CD8-positive, alpha-beta T cell (primary cell): ENCODE measurements at regions of chr1 and their contacts with region 1.

Region 1: GRCh38 chr1:32221980-32222755 is at the starts of genes EIF3I and TMEM234:
- DNase-seq: peak; percentile 75 to 96 (median 91)
- ATAC-seq: peak; percentile 85
- H3K4me3 ChIP-seq: peak within 1 kb of the TSS; percentile 96 to 99
- H3K4me3 Mint-ChIP-seq: peak within 1 kb of the TSS; percentile 97
- H3K27ac ChIP-seq: peak within 1 kb of the TSS; percentile 99 to 100
- H3K27ac Mint-ChIP-seq: peak within 1 kb of the TSS; percentile 99
- H3K4me1 ChIP-seq: peaks cover 30% of the 10 kb centered on the region
- H3K4me1 Mint-ChIP-seq: peaks cover 49% of the 10 kb centered on the region
- H3K27me3 ChIP-seq: no peaks in the 10 kb centered on the region
- H3K27me3 Mint-ChIP-seq: no peaks in the 10 kb centered on the region
- CTCF ChIP-seq: no peak
- total RNA-seq, gene EIF3I: 97.4 to 101 TPM
- total RNA-seq, gene TMEM234: 8.6 to 9.1 TPM

Region 2: DNA sequence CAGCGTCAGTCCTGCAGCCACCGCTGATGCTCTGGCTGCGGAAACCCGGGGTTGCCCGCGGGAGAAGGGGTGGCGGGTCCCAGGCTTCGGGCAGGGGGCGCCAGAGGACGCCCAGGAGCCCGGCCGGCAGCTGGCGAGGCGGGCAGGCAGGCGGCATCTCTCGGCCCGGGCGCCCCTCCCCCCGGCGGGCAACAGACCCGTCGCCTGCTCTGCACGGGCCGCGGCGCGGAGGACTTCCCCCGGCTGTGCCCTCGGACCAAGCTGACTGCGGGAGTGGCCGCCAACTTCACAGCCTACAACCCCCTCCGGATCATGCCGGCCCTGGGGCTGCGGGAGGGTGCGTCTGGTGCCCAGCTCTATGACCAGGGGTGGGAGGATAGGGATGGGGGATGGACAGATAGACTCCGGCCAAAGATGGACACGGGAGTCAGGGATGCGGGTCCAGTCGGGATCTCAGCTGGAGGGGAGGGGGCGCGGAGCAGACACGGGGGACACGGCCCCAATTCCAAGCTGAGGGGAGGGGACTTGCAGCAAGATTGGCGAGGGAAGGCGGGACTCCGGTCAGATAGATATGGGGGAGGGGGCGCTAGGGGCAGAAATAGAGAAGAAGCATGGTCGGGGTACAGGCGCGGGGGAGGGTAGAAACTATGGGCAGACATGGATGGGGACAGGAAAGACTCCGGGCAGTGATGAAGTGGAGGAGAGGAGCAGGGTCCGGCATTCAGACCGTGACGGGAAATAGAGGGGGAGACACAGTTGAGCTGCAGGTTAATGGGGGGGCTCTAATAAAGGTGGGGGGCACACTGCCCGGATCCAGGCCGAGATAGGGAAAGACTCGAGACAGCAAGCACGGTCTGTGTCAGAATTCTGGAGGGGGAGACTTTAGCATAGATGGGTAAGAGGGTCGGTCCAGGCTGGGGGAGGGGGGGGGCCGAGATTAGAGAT is 459.2 kb before region 1 on chr1:
- CTCF ChIA-PET with region 1: no interaction called
- POLR2A ChIA-PET with region 1: no interaction called
- intact Hi-C with region 1: loop called in 1 of 2 experiments (anchors 5 kb)
- DNase-seq: peak; percentile 39 to 86 (median 69)
- ATAC-seq: peak; percentile 43
- H3K4me3 ChIP-seq: peak overlapping the region; percentile 41 to 57
- H3K4me3 Mint-ChIP-seq: peak overlapping the region; percentile 80
- H3K27ac ChIP-seq: no peak overlapping the region
- H3K27ac Mint-ChIP-seq: no peak overlapping the region
- H3K4me1 ChIP-seq: peaks cover 40% of the 10 kb centered on the region
- H3K4me1 Mint-ChIP-seq: peaks cover 29% of the 10 kb centered on the region
- H3K27me3 ChIP-seq: peaks cover 11 to 14% of the 10 kb centered on the region in 2 experiments
- H3K27me3 Mint-ChIP-seq: peaks cover 11% of the 10 kb centered on the region
- CTCF ChIP-seq: peak; percentile 45

Region 3: GRCh38 chr1:32107742-32108661 is 114.2 kb before region 1 on chr1 and contains the start of gene KPNA6:
- CTCF ChIA-PET with region 1: no interaction called
- POLR2A ChIA-PET with region 1: no interaction called
- intact Hi-C with region 1: loop called in 1 of 2 experiments (anchors 1 kb)
- DNase-seq: peak; percentile 83 to 98 (median 90)
- ATAC-seq: peak; percentile 89
- H3K4me3 ChIP-seq: peak within 1 kb of the TSS; percentile 87 to 95
- H3K4me3 Mint-ChIP-seq: peak within 1 kb of the TSS; percentile 98
- H3K27ac ChIP-seq: peak within 1 kb of the TSS; percentile 84 to 93
- H3K27ac Mint-ChIP-seq: peak within 1 kb of the TSS; percentile 98
- H3K4me1 ChIP-seq: peaks cover 45% of the 10 kb centered on the region
- H3K4me1 Mint-ChIP-seq: peaks cover 50% of the 10 kb centered on the region
- H3K27me3 ChIP-seq: no peaks in the 10 kb centered on the region
- H3K27me3 Mint-ChIP-seq: no peaks in the 10 kb centered on the region
- CTCF ChIP-seq: no peak
- total RNA-seq, gene KPNA6: 51.7 to 58.7 TPM

Region 4: GRCh38 chr1:32205401-32206370 is 16.5 kb before region 1 on chr1 and contains the start of gene IQCC:
- CTCF ChIA-PET with region 1: interaction called, 3 read pairs
- POLR2A ChIA-PET with region 1: interaction called, 4 read pairs
- intact Hi-C with region 1: loop called (anchors 1 kb)
- DNase-seq: peak; percentile 68 to 94 (median 85)
- ATAC-seq: peak; percentile 57
- H3K4me3 ChIP-seq: peak within 1 kb of the TSS; percentile 65 to 77
- H3K4me3 Mint-ChIP-seq: peak within 1 kb of the TSS; percentile 87
- H3K27ac ChIP-seq: peak within 1 kb of the TSS; percentile 62 to 67
- H3K27ac Mint-ChIP-seq: peak within 1 kb of the TSS; percentile 84
- H3K4me1 ChIP-seq: peaks cover 30% of the 10 kb centered on the region
- H3K4me1 Mint-ChIP-seq: peaks cover 36% of the 10 kb centered on the region
- H3K27me3 ChIP-seq: no peaks in the 10 kb centered on the region
- H3K27me3 Mint-ChIP-seq: no peaks in the 10 kb centered on the region
- CTCF ChIP-seq: no peak
- total RNA-seq, gene IQCC: 1.3 to 2.0 TPM

Region 5: DNA sequence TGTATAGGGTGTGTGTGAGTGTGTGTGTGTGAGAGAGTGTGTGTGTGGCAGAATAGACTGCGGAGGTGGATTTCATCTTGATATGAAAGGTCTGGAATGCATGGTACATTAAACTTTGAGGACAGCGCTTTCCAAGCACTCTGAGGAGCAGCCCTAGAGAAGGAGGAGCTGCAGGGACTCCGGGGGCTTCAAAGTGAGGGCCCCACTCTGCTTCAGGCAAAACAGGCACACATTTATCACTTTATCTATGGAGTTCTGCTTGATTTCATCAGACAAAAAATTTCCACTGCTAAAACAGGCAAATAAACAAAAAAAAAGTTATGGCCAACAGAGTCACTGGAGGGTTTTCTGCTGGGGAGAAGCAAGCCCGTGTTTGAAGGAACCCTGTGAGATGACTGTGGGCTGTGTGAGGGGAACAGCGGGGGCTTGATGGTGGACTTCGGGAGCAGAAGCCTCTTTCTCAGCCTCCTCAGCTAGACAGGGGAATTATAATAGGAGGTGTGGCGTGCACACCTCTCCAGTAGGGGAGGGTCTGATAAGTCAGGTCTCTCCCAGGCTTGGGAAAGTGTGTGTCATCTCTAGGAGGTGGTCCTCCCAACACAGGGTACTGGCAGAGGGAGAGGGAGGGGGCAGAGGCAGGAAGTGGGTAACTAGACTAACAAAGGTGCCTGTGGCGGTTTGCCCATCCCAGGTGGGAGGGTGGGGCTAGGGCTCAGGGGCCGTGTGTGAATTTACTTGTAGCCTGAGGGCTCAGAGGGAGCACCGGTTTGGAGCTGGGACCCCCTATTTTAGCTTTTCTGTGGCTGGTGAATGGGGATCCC is 51.4 kb after region 1 on chr1:
- CTCF ChIA-PET with region 1: interaction called, 3 read pairs
- POLR2A ChIA-PET with region 1: no interaction called
- intact Hi-C with region 1: loop called (anchors 2 to 10 kb)
- DNase-seq: peak; percentile 58 to 96 (median 87)
- ATAC-seq: peak; percentile 88
- H3K4me3 ChIP-seq: peak overlapping the region; percentile 23 to 53
- H3K4me3 Mint-ChIP-seq: peak overlapping the region; percentile 83
- H3K27ac ChIP-seq: peak overlapping the region; percentile 36 to 77
- H3K27ac Mint-ChIP-seq: peak overlapping the region; percentile 98
- H3K4me1 ChIP-seq: peaks cover 78% of the 10 kb centered on the region
- H3K4me1 Mint-ChIP-seq: peaks cover 67% of the 10 kb centered on the region
- H3K27me3 ChIP-seq: no peaks in the 10 kb centered on the region
- H3K27me3 Mint-ChIP-seq: no peaks in the 10 kb centered on the region
- CTCF ChIP-seq: no peak

Region 6: GRCh38 chr1:32351399-32352238 is 129.5 kb after region 1 on chr1:
- CTCF ChIA-PET with region 1: interaction called, 3 read pairs
- POLR2A ChIA-PET with region 1: no interaction called
- intact Hi-C with region 1: loop called in 1 of 2 experiments (anchors 1 kb)
- DNase-seq: peak; percentile 81 to 97 (median 90)
- ATAC-seq: peak; percentile 95
- H3K4me3 ChIP-seq: peak overlapping the region; percentile 57 to 85
- H3K4me3 Mint-ChIP-seq: peak overlapping the region; percentile 81
- H3K27ac ChIP-seq: peak overlapping the region; percentile 60 to 69
- H3K27ac Mint-ChIP-seq: peak overlapping the region; percentile 49
- H3K4me1 ChIP-seq: peaks cover 30% of the 10 kb centered on the region
- H3K4me1 Mint-ChIP-seq: peaks cover 49% of the 10 kb centered on the region
- H3K27me3 ChIP-seq: no peaks in the 10 kb centered on the region
- H3K27me3 Mint-ChIP-seq: no peaks in the 10 kb centered on the region
- CTCF ChIP-seq: no peak

Region 7: GRCh38 chr1:33430692-33431593 is 1208.8 kb after region 1 on chr1 and contains the start of gene PHC2:
- CTCF ChIA-PET with region 1: no interaction called
- POLR2A ChIA-PET with region 1: no interaction called
- intact Hi-C with region 1: loop called in 1 of 2 experiments (anchors 5 kb)
- DNase-seq: peak; percentile 80 to 96 (median 89)
- ATAC-seq: peak; percentile 95
- H3K4me3 ChIP-seq: peak within 1 kb of the TSS; percentile 31 to 47
- H3K4me3 Mint-ChIP-seq: peak within 1 kb of the TSS; percentile 77
- H3K27ac ChIP-seq: no peak within 1 kb of the TSS
- H3K27ac Mint-ChIP-seq: no peak within 1 kb of the TSS
- H3K4me1 ChIP-seq: no peaks in the 10 kb centered on the region
- H3K4me1 Mint-ChIP-seq: peaks cover 3% of the 10 kb centered on the region
- H3K27me3 ChIP-seq: no peaks in the 10 kb centered on the region
- H3K27me3 Mint-ChIP-seq: peaks cover 5% of the 10 kb centered on the region
- CTCF ChIP-seq: no peak
- total RNA-seq, gene PHC2: 39.7 to 40.4 TPM